Dendritic cell treated with granulocyte-macrophage colony-stimulating factor and Interleukin-4, amounts not matched to agents 40 ng/mL and 50 ng/mL, for 4 days (primary cell): ENCODE measurements at regions of chr7 and their contacts with region 1.

Region 1: GRCh38 chr7:37901236-37901827 is 15.3 kb downstream of the SFRP4 start:
- H3K4me3 Mint-ChIP-seq: no peak overlapping the region
- H3K27ac Mint-ChIP-seq: no peak overlapping the region
- H3K4me1 Mint-ChIP-seq: no peaks in the 10 kb centered on the region
- H3K27me3 Mint-ChIP-seq: peaks cover 2% of the 10 kb centered on the region

Region 2: GRCh38 chr7:38222481-38223096 is 321.3 kb after region 1 on chr7:
- intact Hi-C with region 1: loop called (anchors 5 kb)
- H3K4me3 Mint-ChIP-seq: no peak overlapping the region
- H3K27ac Mint-ChIP-seq: no peak overlapping the region
- H3K4me1 Mint-ChIP-seq: peaks cover 17% of the 10 kb centered on the region
- H3K27me3 Mint-ChIP-seq: no peaks in the 10 kb centered on the region